ENCODE measurements at regions of chr10 and their contacts with region 1.

Region 1: GRCh38 chr10:61835069-61835945 is 66.2 kb upstream of the ARID5B start:
- DNase-seq: no peak
- ATAC-seq: no peak
- H3K4me3 Mint-ChIP-seq: no peak overlapping the region
- H3K27ac Mint-ChIP-seq: no peak overlapping the region
- H3K4me1 Mint-ChIP-seq: peaks cover 17% of the 10 kb centered on the region
- H3K27me3 Mint-ChIP-seq: no peaks in the 10 kb centered on the region
- CTCF ChIP-seq: peak; percentile 53

Region 2: DNA sequence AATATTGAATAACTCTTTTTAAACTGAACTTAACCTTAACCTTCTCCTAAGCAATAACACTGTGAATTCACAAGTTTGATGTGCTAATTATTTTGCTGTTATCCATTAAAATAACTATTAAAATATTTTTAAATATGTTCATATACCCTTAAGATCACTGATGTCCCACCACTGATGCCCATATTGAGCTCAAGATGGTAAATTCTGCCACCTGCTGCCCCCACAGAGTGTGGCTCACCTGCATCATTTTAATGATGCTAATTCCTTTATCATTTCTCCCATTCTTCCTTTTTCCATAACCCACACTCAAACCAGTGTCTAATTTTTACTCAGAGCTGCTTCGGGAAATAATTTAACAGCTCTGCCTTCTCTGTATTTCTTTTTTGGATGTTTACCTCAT is 16.1 kb before region 1 on chr10:
- CTCF ChIA-PET with region 1: interaction called, 11 read pairs
- POLR2A ChIA-PET with region 1: no interaction called
- intact Hi-C with region 1: no loop called
- DNase-seq: no peak
- ATAC-seq: no peak
- H3K4me3 Mint-ChIP-seq: no peak overlapping the region
- H3K27ac Mint-ChIP-seq: no peak overlapping the region
- H3K4me1 Mint-ChIP-seq: peaks cover 3% of the 10 kb centered on the region
- H3K27me3 Mint-ChIP-seq: no peaks in the 10 kb centered on the region
- CTCF ChIP-seq: no peak

Region 3: DNA sequence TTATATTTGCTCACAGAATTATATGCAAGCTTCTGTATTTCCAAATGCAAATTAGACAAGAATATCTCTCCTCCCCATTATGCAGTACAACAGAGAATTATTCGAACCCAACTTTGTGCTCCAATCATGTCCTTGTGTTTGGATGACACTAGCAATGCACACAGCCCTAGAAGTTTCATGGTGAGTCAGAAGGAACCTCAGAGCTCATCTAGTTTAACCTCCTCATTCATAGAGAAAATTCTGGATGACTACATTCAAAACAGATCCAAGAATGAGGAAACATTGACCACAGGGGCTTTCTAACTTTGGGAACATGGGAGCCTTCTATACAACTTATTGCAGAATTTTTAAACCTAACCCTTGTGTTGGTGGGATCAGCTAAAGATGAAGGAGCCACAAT is 53.4 kb after region 1 on chr10:
- CTCF ChIA-PET with region 1: no interaction called
- POLR2A ChIA-PET with region 1: no interaction called
- intact Hi-C with region 1: no loop called
- DNase-seq: no peak
- ATAC-seq: peak; percentile 60
- H3K4me3 Mint-ChIP-seq: no peak overlapping the region
- H3K27ac Mint-ChIP-seq: no peak overlapping the region
- H3K4me1 Mint-ChIP-seq: peaks cover 13% of the 10 kb centered on the region
- H3K27me3 Mint-ChIP-seq: no peaks in the 10 kb centered on the region
- CTCF ChIP-seq: no peak

Region 4: DNA sequence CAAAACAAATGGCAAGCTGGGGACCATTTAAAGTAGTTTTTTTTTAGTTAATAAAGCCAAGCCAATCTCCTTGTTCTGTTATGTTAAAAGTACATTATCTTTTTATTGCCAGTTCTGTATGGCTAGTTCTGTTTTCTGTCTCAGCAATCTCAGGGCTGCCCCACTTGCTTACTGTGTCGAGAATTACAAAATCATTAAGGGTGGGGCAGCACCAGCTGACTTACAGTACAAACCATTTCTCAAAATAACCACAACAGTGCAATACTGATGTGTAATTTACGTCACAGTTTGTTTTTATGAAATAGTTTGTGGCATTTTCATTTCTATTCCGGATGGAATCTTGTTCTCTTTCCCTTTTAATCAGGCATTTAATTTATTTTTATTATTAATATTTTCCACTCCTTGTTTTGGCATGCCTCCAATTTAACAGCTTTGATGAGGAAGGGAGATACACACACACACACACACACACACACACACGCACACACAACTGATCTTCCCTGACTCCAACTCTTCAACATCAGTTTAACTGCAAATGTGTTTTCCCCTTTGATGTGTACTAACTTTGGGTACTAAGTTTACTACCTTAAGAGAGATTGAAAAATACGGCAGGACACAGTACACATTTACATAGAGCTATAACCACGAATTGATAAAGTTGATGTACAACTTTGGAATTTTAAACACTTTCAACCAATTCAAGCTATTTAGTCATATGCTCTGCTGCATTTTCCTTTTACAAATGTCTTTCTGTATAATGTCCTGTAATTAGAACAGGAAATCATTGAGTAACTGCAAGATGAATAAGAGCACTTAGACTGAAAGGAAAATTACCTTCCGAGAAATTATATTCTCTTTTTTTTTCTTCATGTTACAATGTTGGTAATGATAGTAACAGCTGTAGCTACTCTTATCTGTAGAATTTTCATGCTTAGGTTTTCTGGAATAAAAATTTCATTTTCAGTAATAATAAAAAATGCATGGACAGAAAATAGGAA is 157.7 kb after region 1 on chr10:
- CTCF ChIA-PET with region 1: no interaction called
- POLR2A ChIA-PET with region 1: no interaction called
- intact Hi-C with region 1: no loop called
- DNase-seq: peak; percentile 72
- ATAC-seq: peak; percentile 41
- H3K4me3 Mint-ChIP-seq: peak overlapping the region; percentile 68
- H3K27ac Mint-ChIP-seq: peak overlapping the region; percentile 95
- H3K4me1 Mint-ChIP-seq: peaks cover 66% of the 10 kb centered on the region
- H3K27me3 Mint-ChIP-seq: no peaks in the 10 kb centered on the region
- CTCF ChIP-seq: no peak

Measured in activated CD8-positive, alpha-beta T cell treated with anti-CD3 and anti-CD28 coated beads for 36 hours (primary cell).